B cell (primary cell): ENCODE measurements at regions of chr15 and their contacts with region 1.

Region 1: DNA sequence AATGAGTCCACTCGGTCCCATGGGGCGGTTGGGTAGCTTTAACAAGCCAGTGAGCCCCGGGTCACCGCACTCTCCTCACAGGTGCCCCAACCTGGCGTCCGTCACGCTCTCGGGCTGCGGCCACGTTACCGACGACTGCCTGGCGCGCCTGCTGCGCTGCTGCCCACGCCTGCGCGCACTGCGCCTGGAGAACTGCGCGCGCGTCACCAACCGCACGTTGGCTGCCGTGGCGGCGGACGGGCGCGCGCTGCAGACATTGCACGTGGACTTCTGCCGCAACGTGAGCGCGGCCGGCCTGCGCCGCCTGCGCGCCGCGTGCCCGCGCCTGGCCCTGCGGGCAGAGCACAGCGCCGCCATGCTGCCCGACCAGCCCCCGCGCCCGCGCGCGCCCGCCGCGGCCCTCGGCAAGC is 3.4 kb downstream of the FBXL22 start:
- DNase-seq: peak; percentile 96
- ATAC-seq: peak; percentile 76
- H3K4me3 ChIP-seq: peak overlapping the region in 4 of 5 experiments; percentile 67 to 86 (median 74)
- H3K4me3 Mint-ChIP-seq: peak overlapping the region; percentile 96
- H3K27ac ChIP-seq: peak overlapping the region; percentile 65 to 76
- H3K27ac Mint-ChIP-seq: peak overlapping the region; percentile 96
- H3K4me1 ChIP-seq: peaks cover 44 to 57% of the 10 kb centered on the region in 2 donors
- H3K4me1 Mint-ChIP-seq: peaks cover 73% of the 10 kb centered on the region
- H3K27me3 ChIP-seq: no peaks in the 10 kb centered on the region
- H3K27me3 Mint-ChIP-seq: no peaks in the 10 kb centered on the region
- CTCF ChIP-seq: no peak

Region 2: GRCh38 chr15:63481105-63481810 is 119.4 kb before region 1 on chr15:
- CTCF ChIA-PET with region 1: interaction called, 10 read pairs
- POLR2A ChIA-PET with region 1: interaction called, 12 read pairs
- intact Hi-C with region 1: no loop called
- DNase-seq: no peak
- ATAC-seq: peak; percentile 13
- H3K4me3 ChIP-seq: peak overlapping the region in 1 of 5 experiments; percentile 24
- H3K4me3 Mint-ChIP-seq: peak overlapping the region; percentile 79
- H3K27ac ChIP-seq: peak overlapping the region; percentile 95 to 98
- H3K27ac Mint-ChIP-seq: peak overlapping the region; percentile 98
- H3K4me1 ChIP-seq: peaks cover 75 to 82% of the 10 kb centered on the region in 2 donors
- H3K4me1 Mint-ChIP-seq: peaks cover 77% of the 10 kb centered on the region
- H3K27me3 ChIP-seq: no peaks in the 10 kb centered on the region
- H3K27me3 Mint-ChIP-seq: no peaks in the 10 kb centered on the region
- CTCF ChIP-seq: no peak

Region 3: DNA sequence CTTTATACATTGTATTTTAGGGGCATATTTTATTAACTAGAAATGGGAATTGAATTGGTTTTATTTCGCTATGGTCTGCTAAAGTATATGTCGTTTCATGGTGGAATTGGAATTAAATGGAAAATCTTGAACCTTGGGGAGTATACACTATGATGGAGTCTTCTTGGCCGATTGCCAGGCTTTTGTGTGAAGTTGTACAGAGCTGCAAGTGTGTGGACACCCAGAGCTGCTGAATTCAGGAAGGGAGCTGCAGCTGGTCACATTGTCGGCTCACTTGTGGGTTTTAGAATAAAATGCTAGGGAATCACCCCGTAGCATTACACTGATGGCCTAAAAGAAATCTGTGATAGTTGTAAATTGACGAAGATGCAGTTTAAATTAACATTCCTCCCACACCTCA is 61.1 kb before region 1 on chr15:
- CTCF ChIA-PET with region 1: interaction called, 4 read pairs
- POLR2A ChIA-PET with region 1: no interaction called
- intact Hi-C with region 1: loop called (anchors 10 kb)
- DNase-seq: no peak
- ATAC-seq: no peak
- H3K4me3 ChIP-seq: no peak overlapping the region
- H3K4me3 Mint-ChIP-seq: no peak overlapping the region
- H3K27ac ChIP-seq: peak overlapping the region in 1 of 2 donors; percentile 68
- H3K27ac Mint-ChIP-seq: peak overlapping the region; percentile 48
- H3K4me1 ChIP-seq: peaks cover 41 to 58% of the 10 kb centered on the region in 2 donors
- H3K4me1 Mint-ChIP-seq: peaks cover 74% of the 10 kb centered on the region
- H3K27me3 ChIP-seq: no peaks in the 10 kb centered on the region
- H3K27me3 Mint-ChIP-seq: no peaks in the 10 kb centered on the region
- CTCF ChIP-seq: no peak